ENCODE measurements at regions of chr12 and their contacts with region 1.

Region 1: GRCh38 chr12:111024205-111024801 is 103.9 kb upstream of the MYL2 start:
- DNase-seq: peak; percentile 75
- H3K4me3 ChIP-seq: no peak overlapping the region
- H3K27ac ChIP-seq: no peak overlapping the region
- H3K4me1 ChIP-seq: no peaks in the 10 kb centered on the region
- H3K27me3 ChIP-seq: no peaks in the 10 kb centered on the region
- CTCF ChIP-seq: peak; percentile 55 to 65 (median 60)
- POLR2A ChIP-seq: no peak

Region 2: DNA sequence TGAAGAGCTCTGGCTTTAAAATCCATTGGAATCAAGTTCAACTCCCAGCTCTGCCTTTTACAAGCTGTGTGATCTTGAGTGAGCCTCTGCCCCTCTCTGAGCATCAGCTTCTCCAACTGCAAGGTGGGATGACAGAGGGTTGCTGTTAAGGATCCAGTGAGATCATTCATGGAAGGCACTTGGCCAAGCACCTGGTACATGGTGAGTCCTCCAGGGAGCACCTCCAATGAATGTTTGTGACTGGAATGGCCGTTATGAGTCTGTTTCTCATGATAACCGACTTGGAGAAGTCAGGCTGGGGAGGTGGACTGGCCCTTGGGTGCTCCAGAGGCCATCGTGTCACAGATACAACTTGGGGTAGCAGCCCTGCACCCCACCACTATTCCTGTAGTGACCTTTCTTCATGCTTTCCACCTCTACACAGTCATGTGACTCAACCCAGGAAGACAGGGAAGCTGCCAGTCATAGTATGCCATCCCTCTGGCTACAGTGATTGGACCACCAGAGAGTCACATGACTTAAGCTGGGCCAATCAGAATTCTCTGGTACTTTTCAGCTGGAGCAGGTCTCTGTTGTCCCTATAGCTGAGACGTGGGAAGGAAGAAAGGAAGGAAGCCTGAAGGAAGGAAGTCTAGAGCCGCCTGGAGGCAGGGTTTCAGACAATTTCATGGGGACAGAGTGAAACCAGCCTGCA is 42.6 kb after region 1 on chr12:
- intact Hi-C with region 1: no loop called
- DNase-seq: peak; percentile 41
- H3K4me3 ChIP-seq: no peak overlapping the region
- H3K27ac ChIP-seq: no peak overlapping the region
- H3K4me1 ChIP-seq: no peaks in the 10 kb centered on the region
- H3K27me3 ChIP-seq: no peaks in the 10 kb centered on the region
- CTCF ChIP-seq: no peak
- POLR2A ChIP-seq: no peak

Region 3: DNA sequence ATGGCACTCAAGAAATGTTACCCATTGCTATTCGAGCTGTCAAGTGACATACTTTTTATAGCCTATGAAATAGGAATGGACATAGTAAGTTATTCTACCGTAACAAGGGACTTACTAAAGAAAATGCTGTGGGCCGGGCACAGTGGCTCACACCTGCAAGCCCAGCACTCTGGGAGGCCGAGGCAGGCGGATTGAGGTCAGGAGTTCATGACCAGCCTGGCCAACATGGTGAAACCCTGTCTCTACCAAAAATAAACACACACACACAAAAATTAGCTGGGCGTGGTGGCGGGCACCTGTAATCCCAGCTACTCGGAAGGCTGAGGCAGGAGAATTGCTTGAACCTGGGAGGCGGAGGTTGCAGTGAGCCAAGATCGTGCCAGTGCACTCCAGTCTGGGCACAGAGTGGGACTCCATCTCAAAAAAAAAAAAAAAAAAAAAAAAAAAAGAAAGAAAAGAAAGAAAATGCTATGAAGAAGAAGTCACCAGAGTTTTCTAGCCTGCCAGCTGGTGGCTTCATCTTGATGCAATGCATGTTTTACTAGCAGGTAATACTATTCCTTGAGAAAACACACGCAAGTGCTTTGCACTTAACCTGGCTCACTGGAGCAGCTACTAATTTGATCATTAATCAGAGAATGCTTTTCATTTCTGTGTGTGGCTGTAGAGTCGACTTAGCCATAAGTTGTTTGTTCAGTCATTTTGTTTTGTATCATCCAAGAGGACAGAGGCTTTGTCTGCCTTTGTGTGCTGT is 62.8 kb after region 1 on chr12:
- intact Hi-C with region 1: no loop called
- DNase-seq: no peak
- H3K4me3 ChIP-seq: no peak overlapping the region
- H3K27ac ChIP-seq: no peak overlapping the region
- H3K4me1 ChIP-seq: no peaks in the 10 kb centered on the region
- H3K27me3 ChIP-seq: no peaks in the 10 kb centered on the region
- CTCF ChIP-seq: no peak
- POLR2A ChIP-seq: no peak

Region 4: DNA sequence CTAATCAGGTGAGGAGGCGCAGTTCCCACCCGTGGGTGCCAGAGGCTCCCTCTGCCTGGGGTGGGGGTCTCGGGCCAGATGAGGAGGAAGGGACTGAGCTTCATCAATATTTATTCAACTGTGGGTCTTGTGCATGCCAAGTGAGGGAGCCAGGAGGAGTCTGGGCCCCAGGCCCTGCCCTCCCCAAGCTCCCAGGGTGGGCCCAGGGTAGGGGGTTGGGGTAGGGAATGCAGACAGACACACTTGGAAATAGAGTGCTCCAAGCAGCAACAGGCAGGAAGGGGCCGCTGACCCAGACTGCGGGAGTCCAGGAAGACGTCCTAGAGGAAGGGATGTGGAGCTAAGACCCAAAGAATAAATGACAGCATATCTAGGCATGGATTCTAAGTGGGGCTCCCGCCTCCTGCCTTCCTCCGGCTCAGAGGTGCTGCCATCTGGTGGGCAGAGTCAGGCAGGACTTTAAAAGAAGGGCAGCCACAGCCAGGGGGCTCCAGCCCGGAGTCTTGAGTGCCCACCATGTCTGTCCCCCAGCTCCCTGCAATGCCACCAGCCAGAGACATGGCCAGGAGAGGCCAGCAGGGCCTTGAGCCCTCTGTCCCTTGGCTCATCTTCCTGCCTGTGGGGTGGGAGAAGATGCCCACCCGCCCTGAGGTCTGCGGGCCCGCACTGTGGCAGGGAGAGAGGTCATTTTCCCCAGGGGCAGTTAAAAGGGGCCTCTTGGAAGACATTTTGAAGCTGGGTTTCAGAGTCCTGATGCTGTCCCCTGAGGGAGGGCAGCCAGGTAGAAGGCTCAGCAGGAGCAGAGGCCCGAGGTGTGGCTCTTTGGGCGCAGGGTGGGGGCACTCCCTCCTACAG is 274.5 kb after region 1 on chr12:
- intact Hi-C with region 1: loop called (anchors 10 kb)
- DNase-seq: peak; percentile 65
- H3K4me3 ChIP-seq: no peak overlapping the region
- H3K27ac ChIP-seq: no peak overlapping the region
- H3K4me1 ChIP-seq: no peaks in the 10 kb centered on the region
- H3K27me3 ChIP-seq: no peaks in the 10 kb centered on the region
- CTCF ChIP-seq: peak; percentile 63 to 77 (median 77)
- POLR2A ChIP-seq: no peak

Measured in testis (tissue), 5 donors.